ENCODE measurements at regions of chr5 and their contacts with region 1.

Region 1: DNA sequence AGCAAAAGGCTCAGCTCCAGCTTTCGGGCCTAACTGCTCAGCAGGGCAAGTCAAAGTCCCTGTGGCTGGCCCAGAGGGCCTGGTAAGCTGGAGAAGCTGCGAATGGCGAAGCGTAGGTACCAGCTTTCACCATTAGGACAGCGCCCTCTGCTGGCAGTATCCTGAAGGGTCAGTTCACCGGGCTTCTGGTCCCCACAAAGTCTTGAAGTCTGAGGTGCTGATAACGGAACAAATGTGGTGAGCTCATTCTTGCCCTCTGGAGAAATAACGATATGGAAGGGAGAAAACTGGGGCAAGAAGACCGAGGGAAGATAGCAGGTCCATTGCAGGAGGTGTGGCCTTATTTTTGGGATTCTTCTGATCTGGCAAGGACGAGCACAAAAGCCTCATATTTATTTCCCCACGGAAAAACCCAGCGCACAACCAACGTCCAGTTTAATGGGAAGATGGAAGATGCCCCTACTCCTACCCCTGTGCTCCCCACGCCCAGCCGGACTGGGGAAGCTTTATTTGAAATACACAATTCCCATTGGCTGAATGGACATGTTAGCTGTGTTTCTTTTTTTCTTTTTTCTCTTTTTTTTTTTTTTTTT is 7.2 kb downstream of the SOWAHA start:
- DNase-seq: peak; percentile 97
- ATAC-seq: peak; percentile 83
- H3K4me3 Mint-ChIP-seq: no peak overlapping the region
- H3K27ac Mint-ChIP-seq: no peak overlapping the region
- H3K4me1 Mint-ChIP-seq: peaks cover 10% of the 10 kb centered on the region
- H3K27me3 Mint-ChIP-seq: peaks cover 38% of the 10 kb centered on the region
- CTCF ChIP-seq: peak; percentile 89

Region 2: GRCh38 chr5:132386644-132387286 is 433.5 kb before region 1 on chr5:
- CTCF ChIA-PET with region 1: interaction called, 12 read pairs
- POLR2A ChIA-PET with region 1: no interaction called
- intact Hi-C with region 1: loop called (anchors 10 kb)
- DNase-seq: peak; percentile 87
- ATAC-seq: peak; percentile 92
- H3K4me3 Mint-ChIP-seq: no peak overlapping the region
- H3K27ac Mint-ChIP-seq: peak overlapping the region; percentile 25
- H3K4me1 Mint-ChIP-seq: peaks cover 40% of the 10 kb centered on the region
- H3K27me3 Mint-ChIP-seq: no peaks in the 10 kb centered on the region
- CTCF ChIP-seq: peak; percentile 91

Region 3: DNA sequence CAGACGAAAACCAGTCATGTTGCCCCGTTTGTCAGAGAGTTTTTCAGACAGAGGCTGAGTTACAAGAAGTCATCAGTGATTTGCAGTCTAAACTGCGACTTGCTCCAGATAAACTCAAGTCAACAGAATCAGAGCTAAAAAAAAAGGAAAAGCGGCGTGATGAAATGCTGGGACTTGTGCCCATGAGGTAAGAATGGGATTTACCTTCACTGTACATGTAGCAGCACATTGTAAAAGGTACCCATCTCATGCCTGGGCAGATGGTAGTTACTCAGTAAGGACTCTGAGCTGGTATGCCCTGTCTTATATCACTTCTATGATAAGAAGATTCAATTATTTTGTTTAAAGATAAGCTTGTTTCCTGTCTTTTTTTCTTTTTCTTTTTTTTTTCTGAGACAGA is 224.6 kb before region 1 on chr5:
- CTCF ChIA-PET with region 1: interaction called, 10 read pairs
- POLR2A ChIA-PET with region 1: no interaction called
- intact Hi-C with region 1: no loop called
- DNase-seq: no peak
- ATAC-seq: no peak
- H3K4me3 Mint-ChIP-seq: no peak overlapping the region
- H3K27ac Mint-ChIP-seq: no peak overlapping the region
- H3K4me1 Mint-ChIP-seq: no peaks in the 10 kb centered on the region
- H3K27me3 Mint-ChIP-seq: no peaks in the 10 kb centered on the region
- CTCF ChIP-seq: no peak

Region 4: DNA sequence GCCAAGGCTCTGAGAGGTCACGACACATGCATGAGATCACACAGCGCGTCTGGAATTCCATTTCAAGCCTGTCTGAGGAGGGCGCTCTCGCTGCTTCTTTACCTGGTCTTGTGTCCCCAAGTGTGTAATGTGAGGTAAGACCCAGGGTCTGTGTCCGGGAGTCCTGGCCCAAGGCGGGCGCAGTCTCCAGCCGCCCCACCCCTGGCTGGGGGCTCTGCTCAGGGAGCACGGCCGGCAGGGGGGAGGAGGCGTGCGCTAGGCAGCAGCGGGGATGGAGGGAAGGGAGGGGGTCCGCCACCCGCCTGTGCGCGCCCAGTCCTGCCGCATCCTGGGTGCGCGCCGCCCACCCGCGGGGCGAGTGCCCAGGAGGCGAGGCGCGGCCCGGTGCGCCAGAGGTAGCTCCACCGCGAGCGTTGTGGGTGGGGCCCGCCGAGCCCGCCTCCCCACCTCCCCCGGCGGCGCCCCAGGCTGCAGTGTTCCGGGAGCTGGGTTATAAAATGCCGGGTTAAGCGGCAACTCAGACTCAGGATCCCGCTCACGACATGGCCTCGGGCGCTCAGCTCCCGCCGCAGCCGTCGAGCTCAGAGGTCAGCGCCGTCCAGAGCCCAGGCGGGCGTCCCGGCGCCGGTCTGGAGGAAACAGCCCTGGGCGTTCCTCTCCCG is 73.2 kb before region 1 on chr5 and contains the start of gene CCNI2:
- CTCF ChIA-PET with region 1: interaction called, 39 read pairs
- POLR2A ChIA-PET with region 1: no interaction called
- intact Hi-C with region 1: loop called (anchors 5 kb)
- DNase-seq: peak; percentile 79
- ATAC-seq: peak; percentile 76
- H3K4me3 Mint-ChIP-seq: peak within 1 kb of the TSS; percentile 75
- H3K27ac Mint-ChIP-seq: peak within 1 kb of the TSS; percentile 75
- H3K4me1 Mint-ChIP-seq: peaks cover 36% of the 10 kb centered on the region
- H3K27me3 Mint-ChIP-seq: peaks cover 10% of the 10 kb centered on the region
- CTCF ChIP-seq: peak; percentile 68
- total RNA-seq, gene CCNI2: 8.7 to 10.0 TPM

Region 5: DNA sequence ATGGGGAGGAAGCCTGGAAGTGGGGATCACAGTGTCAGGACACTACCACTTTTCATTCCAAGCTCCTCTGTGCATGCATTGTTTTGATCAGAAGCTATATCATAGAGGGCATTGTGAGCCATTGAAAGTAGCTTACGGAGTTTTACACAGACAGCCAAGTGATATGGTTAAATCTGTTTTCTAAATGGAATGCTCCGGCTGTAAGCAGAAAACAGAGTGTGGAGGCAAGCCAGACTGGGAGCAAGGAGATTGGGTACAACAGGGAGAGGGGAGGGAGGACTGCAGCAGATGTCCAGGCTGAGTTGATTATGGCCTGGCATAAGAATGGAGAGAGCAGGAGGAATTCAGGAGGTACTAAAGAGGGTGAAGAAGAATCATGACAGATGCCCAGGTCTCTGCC is 22.6 kb before region 1 on chr5:
- CTCF ChIA-PET with region 1: interaction called, 11 read pairs
- POLR2A ChIA-PET with region 1: interaction called, 3 read pairs
- intact Hi-C with region 1: no loop called
- DNase-seq: no peak
- ATAC-seq: no peak
- H3K4me3 Mint-ChIP-seq: no peak overlapping the region
- H3K27ac Mint-ChIP-seq: no peak overlapping the region
- H3K4me1 Mint-ChIP-seq: peaks cover 4% of the 10 kb centered on the region
- H3K27me3 Mint-ChIP-seq: peaks cover 19% of the 10 kb centered on the region
- CTCF ChIP-seq: no peak

Region 6: GRCh38 chr5:132883261-132883834 is 63.1 kb after region 1 on chr5:
- CTCF ChIA-PET with region 1: interaction called, 10 read pairs
- POLR2A ChIA-PET with region 1: no interaction called
- intact Hi-C with region 1: no loop called
- DNase-seq: peak; percentile 25
- ATAC-seq: peak; percentile 67
- H3K4me3 Mint-ChIP-seq: no peak overlapping the region
- H3K27ac Mint-ChIP-seq: no peak overlapping the region
- H3K4me1 Mint-ChIP-seq: peaks cover 5% of the 10 kb centered on the region
- H3K27me3 Mint-ChIP-seq: no peaks in the 10 kb centered on the region
- CTCF ChIP-seq: peak; percentile 53

Region 7: GRCh38 chr5:133347039-133347438 is 526.8 kb after region 1 on chr5:
- CTCF ChIA-PET with region 1: no interaction called
- POLR2A ChIA-PET with region 1: no interaction called
- intact Hi-C with region 1: no loop called
- DNase-seq: no peak
- ATAC-seq: peak; percentile 65
- H3K4me3 Mint-ChIP-seq: no peak overlapping the region
- H3K27ac Mint-ChIP-seq: no peak overlapping the region
- H3K4me1 Mint-ChIP-seq: no peaks in the 10 kb centered on the region
- H3K27me3 Mint-ChIP-seq: peaks cover 4% of the 10 kb centered on the region
- CTCF ChIP-seq: no peak

Measured in activated CD8-positive, alpha-beta T cell treated with anti-CD3 and anti-CD28 coated beads for 36 hours (primary cell).